Left ventricle myocardium inferior (tissue), 1 donor: ENCODE measurements at regions of chr1 and their contacts with region 1.

Region 1: DNA sequence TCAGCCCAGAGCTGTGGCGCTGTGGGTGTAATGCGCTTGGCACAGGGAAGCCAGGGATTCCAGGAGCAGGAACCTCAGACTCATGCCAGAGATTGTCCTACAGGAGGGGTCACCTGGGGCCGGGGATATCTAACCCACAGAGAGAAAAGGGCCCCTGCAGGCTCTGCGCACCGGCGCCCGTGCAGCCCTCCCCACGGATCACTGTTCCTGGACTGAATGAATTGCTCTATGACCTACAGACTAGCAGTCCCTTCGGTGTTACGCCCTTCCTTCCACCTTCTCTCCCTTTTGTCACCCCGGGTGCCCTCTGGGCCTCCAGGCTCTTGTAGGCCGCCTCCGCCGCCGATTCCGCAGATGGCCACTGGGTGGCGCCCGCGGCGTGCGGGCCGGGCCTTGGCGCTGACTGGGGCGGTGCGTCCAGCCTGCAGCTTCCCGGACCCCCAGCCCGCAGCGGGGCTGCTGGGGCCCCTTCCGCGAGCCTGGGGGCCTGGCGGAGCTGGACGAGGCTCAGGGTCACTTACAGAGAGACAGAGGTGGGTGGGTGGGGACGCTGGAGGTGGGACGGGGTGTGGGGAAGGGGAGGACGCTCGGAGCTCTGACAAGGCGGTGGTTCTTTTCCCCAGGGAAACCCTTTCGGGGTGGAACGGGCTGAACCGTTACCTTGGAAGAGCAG is 101.3 kb downstream of the IER5 start:
- DNase-seq: peak; percentile 65
- H3K4me3 ChIP-seq: peak overlapping the region; percentile 56
- H3K27ac ChIP-seq: peak overlapping the region; percentile 39
- H3K4me1 ChIP-seq: peaks cover 13% of the 10 kb centered on the region
- H3K27me3 ChIP-seq: peaks cover 18% of the 10 kb centered on the region
- CTCF ChIP-seq: peak; percentile 94

Region 2: GRCh38 chr1:180734366-180734765 is 455.5 kb before region 1 on chr1:
- intact Hi-C with region 1: no loop called
- DNase-seq: no peak
- H3K4me3 ChIP-seq: no peak overlapping the region
- H3K27ac ChIP-seq: no peak overlapping the region
- H3K4me1 ChIP-seq: no peaks in the 10 kb centered on the region
- H3K27me3 ChIP-seq: no peaks in the 10 kb centered on the region
- CTCF ChIP-seq: no peak

Region 3: DNA sequence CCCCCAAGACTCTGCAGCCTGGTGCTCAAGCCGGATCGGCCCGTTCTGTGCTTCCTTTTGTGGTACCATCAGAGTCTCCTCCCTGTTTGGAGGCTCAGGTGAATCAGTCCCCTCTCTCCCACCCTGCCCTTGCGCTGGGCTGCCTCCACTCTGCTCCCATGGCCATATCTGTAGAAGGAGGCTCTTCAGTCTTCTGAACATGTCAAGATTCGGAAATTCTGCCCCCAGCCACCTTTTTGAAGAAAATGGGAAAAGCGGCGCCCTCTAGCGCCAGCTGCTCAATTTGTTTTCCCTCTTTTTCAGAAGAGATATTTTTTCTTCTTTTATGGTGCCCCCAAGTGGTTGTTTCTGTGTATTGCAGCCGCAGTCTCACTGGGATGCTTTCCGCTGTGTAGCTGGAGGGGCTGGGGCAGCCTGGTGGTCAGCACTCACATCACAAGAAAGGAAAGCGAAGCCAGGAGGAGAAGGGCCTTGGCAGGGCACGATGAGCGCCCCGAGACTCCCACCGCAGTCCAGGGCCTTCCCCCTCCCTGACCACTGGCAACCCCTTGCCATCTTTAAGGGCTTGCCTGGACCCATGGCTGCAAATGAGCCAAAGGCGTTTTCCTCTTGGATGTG is 235.1 kb after region 1 on chr1:
- intact Hi-C with region 1: loop called (anchors 5 kb)
- DNase-seq: peak; percentile 49
- H3K4me3 ChIP-seq: no peak overlapping the region
- H3K27ac ChIP-seq: no peak overlapping the region
- H3K4me1 ChIP-seq: peaks cover 4% of the 10 kb centered on the region
- H3K27me3 ChIP-seq: peaks cover 51% of the 10 kb centered on the region
- CTCF ChIP-seq: peak; percentile 98